B cell (primary cell): ENCODE measurements at regions of chr5 and their contacts with region 1.

Region 1: DNA sequence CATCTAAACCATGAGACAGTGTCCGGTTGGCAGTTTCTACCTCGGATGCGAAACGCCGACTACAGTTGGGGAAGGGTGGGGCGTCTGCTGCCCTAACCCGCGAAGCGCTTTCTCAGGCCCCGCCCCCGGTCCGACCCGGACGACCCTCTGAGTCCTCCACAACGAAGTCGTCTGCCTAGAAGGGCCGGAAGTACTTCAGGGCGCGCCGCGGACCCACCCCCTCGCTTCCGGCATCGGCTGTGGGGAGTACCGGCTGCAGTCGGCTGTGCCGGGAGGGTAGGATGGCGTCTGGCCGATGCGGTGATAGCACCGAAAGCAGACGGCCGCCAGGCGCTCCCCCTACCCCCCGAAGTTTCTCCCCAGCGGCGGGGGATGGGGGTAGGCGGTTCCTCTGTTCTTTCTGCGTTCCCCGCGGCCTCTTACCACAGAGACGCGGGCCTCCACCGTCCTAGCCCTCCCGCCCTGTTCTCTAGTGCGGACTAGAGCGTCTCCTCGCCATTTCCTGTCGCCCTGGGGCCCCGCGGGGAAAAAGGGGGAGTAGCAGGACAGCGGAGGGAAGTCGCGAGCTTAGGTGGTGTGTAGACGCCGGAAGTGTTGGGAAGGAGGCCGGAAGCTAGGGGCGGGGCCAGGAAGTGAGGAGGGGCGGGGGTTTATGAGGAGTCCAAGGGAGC is at the start of gene TRIM41:
- DNase-seq: peak; percentile 99
- ATAC-seq: peak; percentile 68
- H3K4me3 ChIP-seq: peak within 1 kb of the TSS; percentile 68 to 95 (median 89)
- H3K4me3 Mint-ChIP-seq: peak within 1 kb of the TSS; percentile 94
- H3K27ac ChIP-seq: peak within 1 kb of the TSS; percentile 95
- H3K27ac Mint-ChIP-seq: peak within 1 kb of the TSS; percentile 98
- H3K4me1 ChIP-seq: peaks cover 18 to 41% of the 10 kb centered on the region in 2 donors
- H3K4me1 Mint-ChIP-seq: peaks cover 54% of the 10 kb centered on the region
- H3K27me3 ChIP-seq: no peaks in the 10 kb centered on the region
- H3K27me3 Mint-ChIP-seq: no peaks in the 10 kb centered on the region
- CTCF ChIP-seq: no peak
- total RNA-seq, gene TRIM41: 44.3 and 45.2 TPM in 2 replicates

Region 2: DNA sequence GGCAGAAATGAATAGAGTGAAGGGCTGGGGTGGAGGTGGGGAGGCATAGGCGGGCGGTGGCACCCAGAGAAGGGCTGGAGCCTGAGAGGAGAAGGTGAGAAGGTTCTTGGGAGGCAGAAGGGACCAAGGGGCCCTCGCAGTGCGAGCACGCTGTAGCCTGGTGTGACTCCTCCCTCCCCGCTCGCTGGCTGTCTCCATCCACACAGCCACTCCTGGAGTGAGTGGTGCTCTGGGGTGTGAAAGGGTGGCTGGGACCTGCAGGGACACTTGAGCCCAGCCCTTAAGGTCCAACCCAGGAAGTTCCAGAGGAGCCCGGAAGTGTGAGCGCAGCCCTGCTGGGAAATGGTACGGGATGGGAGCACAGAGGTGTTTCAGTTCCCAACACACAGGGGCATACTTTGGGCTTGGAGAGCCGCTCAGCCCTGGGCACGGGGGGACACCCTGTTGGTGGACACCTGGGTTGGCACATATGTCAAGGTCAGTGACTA is 622.6 kb before region 1 on chr5:
- CTCF ChIA-PET with region 1: no interaction called
- POLR2A ChIA-PET with region 1: interaction called, 15 read pairs
- intact Hi-C with region 1: no loop called
- DNase-seq: no peak
- ATAC-seq: no peak
- H3K4me3 ChIP-seq: no peak overlapping the region
- H3K4me3 Mint-ChIP-seq: no peak overlapping the region
- H3K27ac ChIP-seq: no peak overlapping the region
- H3K27ac Mint-ChIP-seq: no peak overlapping the region
- H3K4me1 ChIP-seq: no peaks in the 10 kb centered on the region
- H3K4me1 Mint-ChIP-seq: no peaks in the 10 kb centered on the region
- H3K27me3 ChIP-seq: peaks cover 0 to under 1% (median 0%) of the 10 kb centered on the region in 4 experiments
- H3K27me3 Mint-ChIP-seq: no peaks in the 10 kb centered on the region
- CTCF ChIP-seq: no peak

Region 3: GRCh38 chr5:180802325-180803180 is 420.6 kb before region 1 on chr5 and contains the start of gene MGAT1:
- CTCF ChIA-PET with region 1: interaction called, 3 read pairs
- POLR2A ChIA-PET with region 1: no interaction called
- intact Hi-C with region 1: loop called (anchors 2 kb)
- DNase-seq: peak; percentile 82
- ATAC-seq: peak; percentile 65
- H3K4me3 ChIP-seq: peak within 1 kb of the TSS; percentile 82 to 96 (median 90)
- H3K4me3 Mint-ChIP-seq: peak within 1 kb of the TSS; percentile 96
- H3K27ac ChIP-seq: peak within 1 kb of the TSS; percentile 81 to 90
- H3K27ac Mint-ChIP-seq: peak within 1 kb of the TSS; percentile 87
- H3K4me1 ChIP-seq: peaks cover 80 to 83% of the 10 kb centered on the region in 2 donors
- H3K4me1 Mint-ChIP-seq: peaks cover 84% of the 10 kb centered on the region
- H3K27me3 ChIP-seq: no peaks in the 10 kb centered on the region
- H3K27me3 Mint-ChIP-seq: no peaks in the 10 kb centered on the region
- CTCF ChIP-seq: no peak
- total RNA-seq, gene MGAT1: 140 and 144 TPM in 2 replicates

Region 4: GRCh38 chr5:181098762-181099601 is 124.2 kb before region 1 on chr5:
- CTCF ChIA-PET with region 1: no interaction called
- POLR2A ChIA-PET with region 1: no interaction called
- intact Hi-C with region 1: no loop called
- DNase-seq: no peak
- ATAC-seq: no peak
- H3K4me3 ChIP-seq: no peak overlapping the region
- H3K4me3 Mint-ChIP-seq: peak overlapping the region; percentile 53
- H3K27ac ChIP-seq: no peak overlapping the region
- H3K27ac Mint-ChIP-seq: peak overlapping the region; percentile 59
- H3K4me1 ChIP-seq: no peaks in the 10 kb centered on the region
- H3K4me1 Mint-ChIP-seq: peaks cover 16% of the 10 kb centered on the region
- H3K27me3 ChIP-seq: peaks cover 0 to 23% (median 11%) of the 10 kb centered on the region in 4 experiments
- H3K27me3 Mint-ChIP-seq: peaks cover 18% of the 10 kb centered on the region
- CTCF ChIP-seq: no peak

Region 5: GRCh38 chr5:181181650-181182565 is 41.3 kb before region 1 on chr5:
- CTCF ChIA-PET with region 1: interaction called, 48 read pairs
- POLR2A ChIA-PET with region 1: interaction called, 74 read pairs
- intact Hi-C with region 1: loop called (anchors 1 kb)
- DNase-seq: peak; percentile 85
- ATAC-seq: peak; percentile 74
- H3K4me3 ChIP-seq: no peak overlapping the region
- H3K4me3 Mint-ChIP-seq: peak overlapping the region; percentile 71
- H3K27ac ChIP-seq: no peak overlapping the region
- H3K27ac Mint-ChIP-seq: peak overlapping the region; percentile 70
- H3K4me1 ChIP-seq: peaks cover 8 to 33% of the 10 kb centered on the region in 2 donors
- H3K4me1 Mint-ChIP-seq: peaks cover 31% of the 10 kb centered on the region
- H3K27me3 ChIP-seq: no peaks in the 10 kb centered on the region
- H3K27me3 Mint-ChIP-seq: no peaks in the 10 kb centered on the region
- CTCF ChIP-seq: peak; percentile 81

Region 6: DNA sequence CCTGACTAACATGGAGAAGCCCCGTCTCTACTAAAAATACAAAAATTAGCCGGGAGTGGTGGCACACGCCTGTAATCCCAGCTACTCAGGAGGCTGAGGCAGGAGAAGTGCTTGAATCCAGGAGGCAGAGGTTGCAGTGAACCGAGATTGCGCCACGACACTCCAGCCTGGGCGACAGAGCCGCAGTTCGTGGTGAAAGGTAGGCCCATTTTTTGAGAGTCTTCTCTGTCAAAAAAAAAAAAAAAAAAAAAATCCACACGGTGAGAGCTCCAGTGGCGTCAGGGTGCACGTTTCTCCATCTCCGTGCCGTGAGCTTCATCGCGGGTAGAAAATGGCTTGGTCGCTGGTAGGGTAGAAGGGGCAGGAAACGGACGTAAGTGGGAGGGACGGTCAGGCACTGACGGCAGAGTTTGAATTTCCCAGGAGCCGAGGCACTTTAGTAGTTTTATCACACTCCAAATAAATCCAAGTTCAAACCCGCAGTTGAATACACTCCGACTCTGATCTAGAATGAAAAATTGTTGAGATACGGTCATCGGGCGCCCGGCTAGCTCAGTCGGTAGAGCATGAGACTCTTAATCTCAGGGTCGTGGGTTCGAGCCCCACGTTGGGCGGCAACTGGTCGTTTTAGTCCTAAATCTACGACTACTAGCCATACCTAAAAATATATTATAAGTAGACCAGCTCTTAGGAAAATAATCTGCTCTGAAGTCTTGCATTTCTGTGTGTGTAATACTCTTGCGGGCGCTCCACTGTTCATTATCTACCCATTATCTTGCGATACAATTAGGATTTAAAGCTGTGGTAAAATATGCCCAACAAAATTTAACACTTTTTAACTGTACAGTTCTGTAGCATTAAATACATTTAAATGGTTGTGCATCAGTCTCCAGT is 15.7 kb before region 1 on chr5:
- CTCF ChIA-PET with region 1: interaction called, 11 read pairs
- POLR2A ChIA-PET with region 1: interaction called, 14 read pairs
- intact Hi-C with region 1: loop called (anchors 1 kb)
- DNase-seq: peak; percentile 83
- ATAC-seq: peak; percentile 50
- H3K4me3 ChIP-seq: peak overlapping the region; percentile 54 to 71 (median 68)
- H3K4me3 Mint-ChIP-seq: peak overlapping the region; percentile 98
- H3K27ac ChIP-seq: peak overlapping the region in 1 of 2 donors; percentile 57
- H3K27ac Mint-ChIP-seq: peak overlapping the region; percentile 95
- H3K4me1 ChIP-seq: peaks cover 23 to 35% of the 10 kb centered on the region in 2 donors
- H3K4me1 Mint-ChIP-seq: peaks cover 40% of the 10 kb centered on the region
- H3K27me3 ChIP-seq: peaks cover 0 to 26% (median 12%) of the 10 kb centered on the region in 4 experiments
- H3K27me3 Mint-ChIP-seq: peaks cover 14% of the 10 kb centered on the region
- CTCF ChIP-seq: no peak

Region 7: DNA sequence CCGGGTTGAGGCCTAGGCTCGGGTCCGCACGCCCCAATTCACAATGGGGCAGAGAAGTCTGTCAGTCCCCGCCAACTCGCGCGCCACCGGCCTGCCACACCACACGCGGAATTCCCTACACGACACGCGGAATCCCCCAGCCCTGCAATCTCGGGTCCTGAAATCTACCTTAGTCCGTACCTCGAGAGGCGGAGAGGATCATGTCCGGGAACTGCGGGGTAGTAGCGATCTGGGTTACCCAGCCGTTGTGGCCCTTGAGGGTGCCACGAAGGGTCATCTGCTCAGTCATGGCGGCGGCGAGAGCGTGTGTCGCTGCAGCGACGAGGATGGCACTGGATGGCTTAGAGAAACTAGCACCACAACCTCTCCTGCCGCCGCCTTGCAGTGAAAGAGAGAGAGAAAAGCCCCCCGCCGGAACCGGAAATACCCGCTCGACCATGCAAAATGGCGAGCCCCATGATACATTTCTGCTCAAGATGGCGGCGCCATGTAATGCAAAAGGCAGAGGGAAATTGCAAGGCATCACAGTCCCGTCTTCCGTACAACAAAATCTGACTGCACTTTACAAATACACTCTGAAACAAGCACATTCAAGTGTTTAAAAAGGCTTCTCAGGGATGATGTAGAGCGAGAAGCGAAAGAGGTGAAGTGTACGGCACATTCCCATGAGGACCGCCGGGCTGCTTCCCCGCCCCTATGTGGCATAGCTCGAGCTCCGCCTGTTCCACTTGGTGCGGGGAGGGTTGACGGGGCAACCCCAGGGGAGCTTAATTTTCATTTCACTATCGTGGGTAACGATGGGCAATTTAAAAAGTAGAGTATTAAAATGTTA is 20.5 kb after region 1 on chr5 and contains the start of gene RACK1:
- CTCF ChIA-PET with region 1: interaction called, 9 read pairs
- POLR2A ChIA-PET with region 1: interaction called, 45 read pairs
- intact Hi-C with region 1: loop called (anchors 1 kb)
- DNase-seq: peak; percentile 96
- ATAC-seq: peak; percentile 75
- H3K4me3 ChIP-seq: peak within 1 kb of the TSS; percentile 70 to 99 (median 98)
- H3K4me3 Mint-ChIP-seq: peak within 1 kb of the TSS; percentile 99
- H3K27ac ChIP-seq: peak within 1 kb of the TSS; percentile 91 to 92
- H3K27ac Mint-ChIP-seq: peak within 1 kb of the TSS; percentile 96
- H3K4me1 ChIP-seq: peaks cover 44 to 58% of the 10 kb centered on the region in 2 donors
- H3K4me1 Mint-ChIP-seq: peaks cover 66% of the 10 kb centered on the region
- H3K27me3 ChIP-seq: no peaks in the 10 kb centered on the region
- H3K27me3 Mint-ChIP-seq: no peaks in the 10 kb centered on the region
- CTCF ChIP-seq: no peak
- total RNA-seq, gene RACK1: 1,928 and 2,047 TPM in 2 replicates

Region 8: GRCh38 chr5:181260387-181261319 is 37.5 kb after region 1 on chr5 and contains the start of gene TRIM52:
- CTCF ChIA-PET with region 1: interaction called, 28 read pairs
- POLR2A ChIA-PET with region 1: interaction called, 44 read pairs
- intact Hi-C with region 1: loop called (anchors 1 kb)
- DNase-seq: peak; percentile 94
- ATAC-seq: peak; percentile 79
- H3K4me3 ChIP-seq: peak within 1 kb of the TSS; percentile 67 to 99 (median 98)
- H3K4me3 Mint-ChIP-seq: peak within 1 kb of the TSS; percentile 95
- H3K27ac ChIP-seq: peak within 1 kb of the TSS; percentile 98
- H3K27ac Mint-ChIP-seq: peak within 1 kb of the TSS; percentile 97
- H3K4me1 ChIP-seq: peaks cover 22 to 38% of the 10 kb centered on the region in 2 donors
- H3K4me1 Mint-ChIP-seq: peaks cover 53% of the 10 kb centered on the region
- H3K27me3 ChIP-seq: no peaks in the 10 kb centered on the region
- H3K27me3 Mint-ChIP-seq: no peaks in the 10 kb centered on the region
- CTCF ChIP-seq: peak; percentile 17
- total RNA-seq, gene TRIM52: 58.6 and 61.3 TPM in 2 replicates

Region 9: DNA sequence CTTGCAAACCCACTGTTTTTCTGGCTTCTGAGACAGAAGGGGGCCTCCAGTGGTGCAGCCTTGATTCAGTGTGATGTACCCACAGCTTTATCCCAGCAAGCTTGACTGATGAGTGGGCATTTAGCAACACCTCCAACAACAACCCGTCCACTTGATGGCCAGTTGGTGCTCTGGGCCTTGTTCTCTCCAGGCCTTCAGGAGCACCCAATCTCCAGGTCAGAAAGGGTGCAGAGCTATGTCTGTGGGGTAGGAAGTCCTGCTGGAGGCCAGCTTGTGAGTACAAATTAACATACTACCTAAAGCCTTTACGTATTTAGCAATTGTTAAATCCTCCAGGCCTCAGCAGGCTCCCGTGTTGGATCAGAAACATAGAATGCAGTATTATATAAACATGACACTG is 47.9 kb after region 1 on chr5:
- CTCF ChIA-PET with region 1: no interaction called
- POLR2A ChIA-PET with region 1: no interaction called
- intact Hi-C with region 1: no loop called
- DNase-seq: no peak
- ATAC-seq: no peak
- H3K4me3 ChIP-seq: no peak overlapping the region
- H3K4me3 Mint-ChIP-seq: no peak overlapping the region
- H3K27ac ChIP-seq: no peak overlapping the region
- H3K27ac Mint-ChIP-seq: no peak overlapping the region
- H3K4me1 ChIP-seq: no peaks in the 10 kb centered on the region
- H3K4me1 Mint-ChIP-seq: peaks cover 1% of the 10 kb centered on the region
- H3K27me3 ChIP-seq: no peaks in the 10 kb centered on the region
- H3K27me3 Mint-ChIP-seq: no peaks in the 10 kb centered on the region
- CTCF ChIP-seq: no peak